ENCODE measurements at regions of chr15 and their contacts with region 1.

Region 1: DNA sequence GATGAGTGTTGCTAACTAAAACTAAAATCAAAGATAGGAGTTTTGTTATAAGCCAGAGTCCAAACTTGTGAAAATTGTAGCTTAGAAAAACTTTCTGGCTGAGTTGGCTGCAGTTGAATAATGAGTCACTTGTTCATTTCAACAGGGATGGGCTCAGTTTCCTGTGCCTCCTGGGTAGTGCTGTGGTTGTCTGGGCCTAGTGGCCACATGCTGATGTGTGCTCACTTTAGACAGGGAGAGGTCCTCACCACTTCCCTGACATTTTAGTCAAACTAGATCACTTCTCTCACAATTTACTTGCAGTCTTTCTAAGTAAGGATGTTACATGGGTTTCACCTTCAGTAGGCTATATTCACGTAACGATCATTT is 6.3 kb upstream of the UBE2Q2 start:
- DNase-seq: peak; percentile 55
- H3K4me3 Mint-ChIP-seq: no peak overlapping the region
- H3K27ac Mint-ChIP-seq: no peak overlapping the region
- H3K4me1 Mint-ChIP-seq: peaks cover 13% of the 10 kb centered on the region
- H3K27me3 Mint-ChIP-seq: peaks cover 6% of the 10 kb centered on the region

Region 2: GRCh38 chr15:75758071-75758872 is 78.7 kb before region 1 on chr15:
- intact Hi-C with region 1: loop called (anchors 5 kb)
- DNase-seq: peak; percentile 60
- H3K4me3 Mint-ChIP-seq: peak overlapping the region; percentile 92
- H3K27ac Mint-ChIP-seq: peak overlapping the region; percentile 90
- H3K4me1 Mint-ChIP-seq: peaks cover 16% of the 10 kb centered on the region
- H3K27me3 Mint-ChIP-seq: peaks cover 6% of the 10 kb centered on the region

Region 3: GRCh38 chr15:75817138-75817935 is 19.6 kb before region 1 on chr15:
- intact Hi-C with region 1: loop called (anchors 1 kb)
- DNase-seq: peak; percentile 15
- H3K4me3 Mint-ChIP-seq: peak overlapping the region; percentile 74
- H3K27ac Mint-ChIP-seq: peak overlapping the region; percentile 82
- H3K4me1 Mint-ChIP-seq: peaks cover 22% of the 10 kb centered on the region
- H3K27me3 Mint-ChIP-seq: no peaks in the 10 kb centered on the region

Measured in activated T-helper 1 cell treated with anti-CD3 and anti-CD28 coated beads, Interleukin-12 subunit alpha, Interleukin-12 subunit beta, Interleukin-2, Interleukin-4 antibody, amounts not matched to agents 30 ng/mL and 10 ng/mL and 1 ng/mL, durations not matched to agents 14 hours and 24 hours and 36 hours (primary cell).